ENCODE measurements at regions of chr12 and their contacts with region 1.

Region 1: DNA sequence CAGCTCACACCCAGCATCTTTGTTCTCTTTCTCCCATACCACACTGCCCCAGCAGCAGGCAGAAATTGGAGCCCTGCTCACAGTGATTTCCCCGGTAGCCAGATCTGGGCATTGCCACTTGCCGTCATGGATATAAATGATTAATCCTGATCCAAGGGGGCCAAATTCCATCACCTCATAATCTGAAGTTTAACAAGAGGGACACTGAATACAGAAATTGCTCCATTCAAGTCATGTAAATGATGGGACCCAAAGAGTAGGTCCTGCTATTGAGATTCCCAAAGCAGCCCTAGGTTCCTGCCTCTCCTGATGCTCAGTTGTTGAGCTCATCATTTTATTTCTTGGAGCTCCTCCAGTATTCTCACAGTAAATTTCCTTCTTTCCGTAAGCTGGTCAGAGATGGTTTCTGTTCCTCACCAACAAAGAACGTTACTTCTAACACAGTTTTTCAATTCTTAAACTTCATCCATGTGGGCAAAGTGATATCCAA is 11.7 kb downstream of the ITPR2 start:
- DNase-seq: no peak
- ATAC-seq: peak in 5 of 8 donors; percentile 41 to 72 (median 56)
- H3K4me3 ChIP-seq: no peak overlapping the region
- H3K27ac ChIP-seq: peak overlapping the region in 2 of 10 donors; percentile 4 to 13
- H3K4me1 ChIP-seq: peaks cover 0 to 19% (median 0%) of the 10 kb centered on the region in 9 donors
- H3K27me3 ChIP-seq: no peaks in the 10 kb centered on the region
- CTCF ChIP-seq: no peak

Region 2: GRCh38 chr12:26732005-26732908 is 89.0 kb before region 1 on chr12:
- intact Hi-C with region 1: loop called in 1 of 10 experiments (anchors 5 kb)
- DNase-seq: no peak
- ATAC-seq: peak in 1 of 8 donors; percentile 53
- H3K4me3 ChIP-seq: no peak overlapping the region
- H3K27ac ChIP-seq: peak overlapping the region in 1 of 10 donors; percentile 21
- H3K4me1 ChIP-seq: peaks cover 0 to 50% (median 19%) of the 10 kb centered on the region in 9 donors
- H3K27me3 ChIP-seq: no peaks in the 10 kb centered on the region
- CTCF ChIP-seq: no peak

Region 3: GRCh38 chr12:28460420-28461130 is 1639.3 kb after region 1 on chr12:
- intact Hi-C with region 1: no loop called
- DNase-seq: no peak
- ATAC-seq: no peak
- H3K4me3 ChIP-seq: no peak overlapping the region
- H3K27ac ChIP-seq: no peak overlapping the region
- H3K4me1 ChIP-seq: peaks cover 0 to 14% (median 3%) of the 10 kb centered on the region in 9 donors
- H3K27me3 ChIP-seq: no peaks in the 10 kb centered on the region
- CTCF ChIP-seq: no peak

Measured in heart right ventricle (tissue), 16 donors.